Activated CD4-positive, alpha-beta T cell treated with anti-CD3 and anti-CD28 coated beads, Interleukin-2, amount 10 ng/mL, durations not matched to agents 7 days and 5 days (primary cell): ENCODE measurements at regions of chr6 and their contacts with region 1.

Region 1: GRCh38 chr6:42818878-42819277 is 37.0 kb downstream of the BICRAL start:
- DNase-seq: no peak
- H3K4me3 Mint-ChIP-seq: no peak overlapping the region
- H3K27ac Mint-ChIP-seq: no peak overlapping the region
- H3K4me1 Mint-ChIP-seq: peaks cover 11% of the 10 kb centered on the region
- H3K27me3 Mint-ChIP-seq: no peaks in the 10 kb centered on the region

Region 2: DNA sequence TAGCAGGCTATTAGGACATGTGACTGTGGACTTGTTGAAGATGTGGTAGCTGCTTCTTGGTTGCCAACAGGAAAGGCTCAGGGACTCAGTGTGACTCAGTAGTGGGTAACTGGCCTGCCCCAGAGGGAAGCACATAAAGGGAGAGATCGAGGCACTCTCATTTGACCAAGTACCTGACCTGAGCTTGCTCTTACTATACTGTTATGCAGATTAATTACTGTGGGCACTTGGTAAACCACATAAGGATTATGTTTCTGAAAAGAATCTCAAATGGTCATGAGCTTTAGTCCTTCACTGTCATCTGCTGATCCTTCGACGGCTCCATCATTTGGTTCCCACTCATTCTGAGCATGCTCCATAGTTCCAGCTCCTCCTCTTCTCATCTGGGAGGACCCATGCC is 12.4 kb after region 1 on chr6:
- CTCF ChIA-PET with region 1: interaction called, 12 read pairs
- POLR2A ChIA-PET with region 1: no interaction called
- DNase-seq: no peak
- H3K4me3 Mint-ChIP-seq: no peak overlapping the region
- H3K27ac Mint-ChIP-seq: no peak overlapping the region
- H3K4me1 Mint-ChIP-seq: peaks cover 2% of the 10 kb centered on the region
- H3K27me3 Mint-ChIP-seq: no peaks in the 10 kb centered on the region